Ascending aorta (tissue), 2 donors: ENCODE measurements at regions of chr9 and their contacts with region 1.

Region 1: GRCh38 chr9:34994260-34994899 is 4.8 kb downstream of the DNAJB5 start:
- DNase-seq: peak in 1 of 2 donors; percentile 72
- H3K4me3 ChIP-seq: peak overlapping the region; percentile 24 to 57
- H3K27ac ChIP-seq: peak overlapping the region; percentile 98 to 100
- H3K4me1 ChIP-seq: peaks cover 19 to 48% of the 10 kb centered on the region in 2 donors
- H3K27me3 ChIP-seq: no peaks in the 10 kb centered on the region
- CTCF ChIP-seq: peak; percentile 49 to 59 (median 54)

Region 2: GRCh38 chr9:34048923-34049697 is 945.3 kb before region 1 on chr9:
- intact Hi-C with region 1: loop called (anchors 10 kb)
- DNase-seq: peak; percentile 94 to 98
- H3K4me3 ChIP-seq: peak overlapping the region; percentile 95 to 98
- H3K27ac ChIP-seq: peak overlapping the region; percentile 85 to 95
- H3K4me1 ChIP-seq: peaks cover 6 to 9% of the 10 kb centered on the region in 2 donors
- H3K27me3 ChIP-seq: no peaks in the 10 kb centered on the region
- CTCF ChIP-seq: no peak

Region 3: GRCh38 chr9:34651876-34652601 is 342.3 kb before region 1 on chr9 and contains the start of gene IL11RA:
- intact Hi-C with region 1: loop called (anchors 5 kb)
- DNase-seq: peak; percentile 53 to 94
- H3K4me3 ChIP-seq: peak within 1 kb of the TSS; percentile 42 to 65
- H3K27ac ChIP-seq: peak within 1 kb of the TSS; percentile 89 to 96
- H3K4me1 ChIP-seq: peaks cover 33 to 64% of the 10 kb centered on the region in 2 donors
- H3K27me3 ChIP-seq: no peaks in the 10 kb centered on the region
- CTCF ChIP-seq: peak in 1 of 3 experiments; percentile 4
- total RNA-seq, gene IL11RA: 50.3 TPM

Region 4: DNA sequence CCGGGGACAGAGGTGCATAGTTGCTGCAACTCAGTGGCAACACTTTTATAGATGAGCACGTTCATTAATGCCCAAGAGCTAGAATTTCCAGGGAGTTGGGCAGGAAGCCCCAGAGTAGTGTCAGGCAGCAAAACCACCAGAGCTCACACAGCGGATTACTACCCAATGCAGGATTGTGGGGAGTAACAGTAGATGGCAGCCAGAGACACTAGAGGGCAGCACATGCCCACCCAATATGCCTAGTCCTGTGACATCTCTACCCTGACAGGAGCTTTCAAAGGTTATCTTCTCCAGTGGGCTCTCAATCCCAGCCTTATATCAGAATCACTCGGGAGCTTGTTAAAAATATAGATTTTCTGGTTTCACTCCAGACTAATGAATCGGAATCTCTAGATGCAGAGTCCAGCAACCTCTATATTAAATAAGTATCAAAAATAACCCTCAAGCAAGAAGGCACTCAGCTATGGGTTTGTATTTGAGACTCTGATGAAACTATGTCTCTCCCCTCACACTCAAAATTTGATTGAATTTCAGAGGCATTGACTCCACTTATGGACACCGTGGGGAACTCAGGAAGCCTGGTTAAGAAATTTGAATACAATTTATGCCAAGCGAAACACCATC is 94.7 kb before region 1 on chr9:
- intact Hi-C with region 1: loop called (anchors 1 kb)
- DNase-seq: peak in 1 of 2 donors; percentile 83
- H3K4me3 ChIP-seq: no peak overlapping the region
- H3K27ac ChIP-seq: no peak overlapping the region
- H3K4me1 ChIP-seq: no peaks in the 10 kb centered on the region
- H3K27me3 ChIP-seq: no peaks in the 10 kb centered on the region
- CTCF ChIP-seq: peak; percentile 76 to 84 (median 79)

Region 5: GRCh38 chr9:35085078-35085477 is 90.7 kb after region 1 on chr9:
- intact Hi-C with region 1: no loop called
- DNase-seq: no peak
- H3K4me3 ChIP-seq: no peak overlapping the region
- H3K27ac ChIP-seq: no peak overlapping the region
- H3K4me1 ChIP-seq: no peaks in the 10 kb centered on the region
- H3K27me3 ChIP-seq: no peaks in the 10 kb centered on the region
- CTCF ChIP-seq: no peak

Region 6: GRCh38 chr9:35140097-35140496 is 145.7 kb after region 1 on chr9:
- intact Hi-C with region 1: no loop called
- DNase-seq: no peak
- H3K4me3 ChIP-seq: no peak overlapping the region
- H3K27ac ChIP-seq: no peak overlapping the region
- H3K4me1 ChIP-seq: no peaks in the 10 kb centered on the region
- H3K27me3 ChIP-seq: no peaks in the 10 kb centered on the region
- CTCF ChIP-seq: no peak

Region 7: DNA sequence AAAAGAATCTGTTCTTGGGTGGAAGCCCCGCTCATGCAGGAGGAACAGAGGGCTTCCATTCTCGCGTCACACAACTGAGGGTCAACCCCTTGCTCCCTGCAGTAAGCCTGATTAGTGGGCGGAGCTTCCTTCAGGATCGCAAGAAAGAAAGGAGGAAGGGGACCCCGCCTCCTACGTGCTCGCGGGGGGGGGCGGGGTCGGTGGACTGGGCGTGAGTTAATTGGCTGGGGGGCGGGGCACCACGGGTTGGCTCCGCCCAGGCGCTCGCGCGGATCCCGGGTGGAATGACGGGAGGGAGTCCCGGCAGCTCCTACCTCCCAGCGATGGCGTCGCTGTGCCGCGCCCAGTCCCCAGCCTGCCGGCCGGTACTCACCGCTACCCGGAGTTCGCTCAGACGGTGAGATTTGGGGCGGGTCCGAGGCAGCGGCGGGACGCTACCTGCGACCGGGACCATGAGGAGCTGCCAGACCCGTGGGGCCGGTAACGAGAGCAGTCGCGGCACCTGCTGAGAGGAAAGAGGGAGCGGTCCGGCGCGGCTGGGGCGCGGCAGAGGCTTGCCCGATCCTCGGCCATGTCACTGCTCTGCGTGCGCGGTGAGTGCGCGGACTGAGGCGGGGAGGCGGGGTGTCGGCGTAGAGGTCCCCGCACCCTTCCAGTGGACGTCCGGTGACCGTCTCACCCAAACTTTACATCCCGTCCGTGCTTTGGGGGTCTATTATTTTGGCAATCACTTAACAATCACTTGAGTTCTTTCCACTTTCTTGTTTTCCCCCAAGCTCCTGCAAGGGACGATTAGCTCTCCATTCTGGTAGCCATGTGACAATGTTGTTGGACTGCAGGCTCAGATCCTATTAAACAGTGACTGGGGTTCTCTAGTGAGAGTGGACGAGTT is 167.6 kb after region 1 on chr9 and contains the start of gene UNC13B:
- intact Hi-C with region 1: loop called (anchors 5 kb)
- DNase-seq: peak; percentile 82 to 97
- H3K4me3 ChIP-seq: peak within 1 kb of the TSS; percentile 80 to 88
- H3K27ac ChIP-seq: peak within 1 kb of the TSS; percentile 89 to 97
- H3K4me1 ChIP-seq: peaks cover 0 to 10% of the 10 kb centered on the region in 2 donors
- H3K27me3 ChIP-seq: no peaks in the 10 kb centered on the region
- CTCF ChIP-seq: peak in 2 of 3 experiments; percentile 25 to 28
- total RNA-seq, gene UNC13B: 26.5 TPM

Region 8: DNA sequence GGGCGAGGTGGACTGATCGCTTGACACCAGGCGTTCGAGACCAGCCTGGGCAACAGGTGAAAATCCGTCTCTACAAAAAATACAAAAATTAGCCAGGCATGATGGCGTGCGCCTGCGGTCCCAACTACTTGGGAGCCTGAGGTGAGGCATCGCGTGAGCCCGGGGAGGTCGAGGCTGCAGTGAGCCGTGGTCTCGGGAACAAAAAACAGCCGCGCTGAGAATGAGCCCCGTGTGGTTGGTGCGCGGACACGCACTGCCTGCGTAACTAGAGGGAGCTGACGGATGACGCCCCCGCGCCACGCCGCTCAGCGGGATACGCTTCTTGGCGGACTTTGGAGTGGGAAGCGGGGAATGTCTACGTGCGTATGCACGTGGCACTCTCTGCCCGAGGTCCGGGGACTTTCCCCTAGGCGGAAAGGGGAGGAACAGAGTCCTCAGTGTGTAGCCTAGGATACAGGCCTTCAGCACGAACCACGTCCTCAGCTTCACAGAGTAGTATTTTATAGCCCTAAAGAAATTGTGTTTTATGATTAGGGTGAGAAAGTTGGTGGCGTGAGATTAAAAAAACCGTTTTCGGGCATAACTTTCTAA is 663.3 kb after region 1 on chr9 and contains the start of gene RMRP:
- intact Hi-C with region 1: loop called (anchors 5 kb)
- DNase-seq: peak; percentile 90 to 99
- H3K4me3 ChIP-seq: peak within 1 kb of the TSS; percentile 88 to 99
- H3K27ac ChIP-seq: peak within 1 kb of the TSS; percentile 97 to 100
- H3K4me1 ChIP-seq: peaks cover 5 to 35% of the 10 kb centered on the region in 2 donors
- H3K27me3 ChIP-seq: no peaks in the 10 kb centered on the region
- CTCF ChIP-seq: peak; percentile 32 to 56 (median 34)
- total RNA-seq, gene RMRP: 17,070 TPM